ENCODE measurements at regions of chr2 and their contacts with region 1.

Region 1: GRCh38 chr2:175251425-175252041 is 70.0 kb upstream of the ATP5MC3 start:
- DNase-seq: no peak
- H3K4me3 ChIP-seq: no peak overlapping the region
- CTCF ChIP-seq: peak; percentile 60

Region 2: DNA sequence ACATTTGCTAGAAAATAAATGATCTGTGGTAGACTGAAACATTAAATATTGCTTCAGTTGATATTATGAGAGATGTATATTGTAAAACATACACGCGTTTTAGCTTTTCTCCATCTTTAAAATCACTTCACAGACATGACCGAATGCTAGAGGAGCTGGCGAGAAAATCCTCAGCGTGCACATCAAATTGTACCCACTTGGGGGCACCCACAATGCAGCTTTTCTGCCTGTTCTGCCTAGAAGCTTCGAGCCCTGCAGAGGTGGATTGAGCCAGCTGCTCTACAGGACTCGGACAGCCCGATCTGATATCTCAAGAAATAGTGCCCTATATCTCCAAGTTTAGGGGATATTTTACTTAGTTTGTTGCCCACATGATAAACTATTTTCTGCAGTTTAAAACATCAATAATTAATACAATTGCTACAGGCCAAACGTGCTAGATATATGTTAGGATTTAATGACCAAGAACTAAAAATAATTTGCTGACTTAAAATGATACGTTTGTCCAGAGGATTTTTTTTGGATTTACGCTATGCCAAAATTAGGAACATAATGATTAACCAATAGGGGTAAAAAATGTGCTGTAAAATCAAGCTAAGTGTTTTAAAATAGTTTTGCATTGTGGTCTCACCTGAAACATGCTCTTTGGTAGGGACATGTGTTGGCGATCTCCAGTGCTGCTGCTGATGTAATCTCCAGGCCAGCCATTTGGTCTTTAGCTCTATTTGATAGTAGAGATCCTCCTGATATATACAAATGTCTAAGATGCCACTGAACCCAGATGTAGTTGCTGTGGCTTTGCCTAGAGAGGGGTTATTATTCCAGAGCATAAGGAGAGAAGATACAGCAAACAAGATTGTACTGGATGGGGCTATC is 47.7 kb before region 1 on chr2:
- CTCF ChIA-PET with region 1: interaction called, 10 read pairs
- POLR2A ChIA-PET with region 1: no interaction called
- DNase-seq: no peak
- H3K4me3 ChIP-seq: no peak overlapping the region
- CTCF ChIP-seq: peak; percentile 66

Region 3: GRCh38 chr2:175535631-175536030 is 284.1 kb after region 1 on chr2:
- CTCF ChIA-PET with region 1: no interaction called
- POLR2A ChIA-PET with region 1: no interaction called
- DNase-seq: no peak
- H3K4me3 ChIP-seq: no peak overlapping the region
- CTCF ChIP-seq: no peak